ENCODE measurements at regions of chr19 and their contacts with region 1.

Region 1: DNA sequence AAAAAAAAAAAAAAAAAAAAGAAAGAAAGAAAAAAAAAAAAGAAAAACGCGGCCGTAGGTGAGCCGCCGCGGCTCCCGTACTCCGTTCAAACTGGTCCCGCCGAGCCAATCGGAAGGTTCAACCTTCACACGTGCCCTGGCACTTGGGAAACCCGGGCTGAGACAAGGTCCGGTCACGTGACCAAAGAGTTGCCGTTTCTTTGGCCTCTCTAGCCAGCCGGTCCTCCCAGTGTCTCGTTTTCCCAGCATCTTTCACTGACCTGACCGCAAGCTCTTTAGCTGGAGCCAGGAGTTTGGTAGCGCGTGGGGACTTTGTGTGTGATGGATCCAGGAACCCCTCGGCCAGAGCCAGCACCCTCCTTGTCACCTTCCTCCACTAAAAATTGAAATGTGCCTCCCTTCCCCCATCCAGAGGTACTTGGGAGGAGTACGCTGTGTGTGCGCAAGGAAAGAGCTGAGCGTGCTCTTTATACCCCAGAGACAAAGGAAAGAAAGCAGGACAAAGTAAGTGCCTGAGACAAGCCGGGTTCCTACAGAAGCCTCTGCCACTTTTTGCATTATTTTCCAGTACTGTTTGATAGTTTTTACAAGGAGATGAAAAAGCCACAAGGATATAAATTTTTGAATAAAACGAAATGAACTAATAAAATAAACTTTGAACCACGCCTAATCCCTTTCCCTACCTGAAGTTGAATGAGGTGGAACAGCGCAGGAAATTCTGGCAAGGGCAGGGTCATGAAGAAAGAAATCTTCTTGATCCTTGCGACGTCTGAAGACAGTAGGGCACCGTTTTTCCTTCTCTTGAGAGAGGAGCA is 959 bp downstream of the TNPO2 start:
- H3K4me3 Mint-ChIP-seq: peak overlapping the region; percentile 90
- H3K27ac Mint-ChIP-seq: peak overlapping the region; percentile 83
- H3K4me1 Mint-ChIP-seq: peaks cover 50% of the 10 kb centered on the region
- H3K27me3 Mint-ChIP-seq: no peaks in the 10 kb centered on the region

Region 2: GRCh38 chr19:12603714-12604113 is 119.1 kb before region 1 on chr19:
- intact Hi-C with region 1: no loop called
- H3K4me3 Mint-ChIP-seq: no peak overlapping the region
- H3K27ac Mint-ChIP-seq: no peak overlapping the region
- H3K4me1 Mint-ChIP-seq: peaks cover 10% of the 10 kb centered on the region
- H3K27me3 Mint-ChIP-seq: no peaks in the 10 kb centered on the region

Region 3: DNA sequence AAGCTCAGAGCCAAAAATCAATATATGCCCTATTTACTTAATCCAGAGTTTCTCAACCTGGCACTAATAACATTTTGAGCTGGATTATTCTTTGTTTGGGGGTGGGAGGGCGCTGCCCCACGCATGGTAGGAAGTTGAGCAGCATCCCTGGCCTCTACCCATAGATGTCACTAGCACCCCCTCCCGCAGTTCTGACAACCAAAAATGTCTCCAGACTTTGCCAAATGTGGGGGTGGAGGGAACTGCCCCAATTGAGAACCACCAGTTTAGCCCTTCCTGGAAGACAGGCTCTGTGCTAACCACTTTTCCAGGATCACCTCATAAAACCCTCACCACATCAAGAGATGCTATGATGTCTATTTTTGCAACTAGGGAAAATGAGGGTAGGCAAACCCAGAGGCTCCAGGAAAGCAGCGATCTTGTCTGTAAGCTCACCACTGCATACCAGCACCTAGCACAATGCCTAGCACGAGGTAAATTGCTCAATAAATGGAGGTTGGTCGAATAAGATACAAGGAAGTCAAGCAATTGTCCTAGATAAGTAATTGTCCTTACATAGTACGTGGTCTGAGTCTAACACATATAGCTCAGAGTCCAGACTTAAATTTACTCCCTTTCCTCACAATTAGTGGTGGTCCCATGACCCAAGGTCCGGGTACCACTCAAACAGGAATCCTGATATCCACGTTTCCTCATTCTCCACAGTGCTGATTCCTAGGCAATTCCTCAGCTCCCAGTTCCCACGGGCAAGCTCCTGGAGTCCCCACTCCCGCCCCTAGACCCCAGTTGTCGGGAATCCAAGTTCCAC is 10.8 kb after region 1 on chr19:
- intact Hi-C with region 1: loop called (anchors 1 kb)
- H3K4me3 Mint-ChIP-seq: peak overlapping the region; percentile 94
- H3K27ac Mint-ChIP-seq: peak overlapping the region; percentile 98
- H3K4me1 Mint-ChIP-seq: peaks cover 62% of the 10 kb centered on the region
- H3K27me3 Mint-ChIP-seq: no peaks in the 10 kb centered on the region

Region 4: GRCh38 chr19:12745166-12745897 is 22.6 kb after region 1 on chr19:
- intact Hi-C with region 1: no loop called
- H3K4me3 Mint-ChIP-seq: no peak overlapping the region
- H3K27ac Mint-ChIP-seq: no peak overlapping the region
- H3K4me1 Mint-ChIP-seq: peaks cover 6% of the 10 kb centered on the region
- H3K27me3 Mint-ChIP-seq: peaks cover 15% of the 10 kb centered on the region

Region 5: GRCh38 chr19:12766051-12766521 is 43.3 kb after region 1 on chr19:
- intact Hi-C with region 1: no loop called
- H3K4me3 Mint-ChIP-seq: peak overlapping the region; percentile 78
- H3K27ac Mint-ChIP-seq: peak overlapping the region; percentile 60
- H3K4me1 Mint-ChIP-seq: peaks cover 7% of the 10 kb centered on the region
- H3K27me3 Mint-ChIP-seq: no peaks in the 10 kb centered on the region

Region 6: DNA sequence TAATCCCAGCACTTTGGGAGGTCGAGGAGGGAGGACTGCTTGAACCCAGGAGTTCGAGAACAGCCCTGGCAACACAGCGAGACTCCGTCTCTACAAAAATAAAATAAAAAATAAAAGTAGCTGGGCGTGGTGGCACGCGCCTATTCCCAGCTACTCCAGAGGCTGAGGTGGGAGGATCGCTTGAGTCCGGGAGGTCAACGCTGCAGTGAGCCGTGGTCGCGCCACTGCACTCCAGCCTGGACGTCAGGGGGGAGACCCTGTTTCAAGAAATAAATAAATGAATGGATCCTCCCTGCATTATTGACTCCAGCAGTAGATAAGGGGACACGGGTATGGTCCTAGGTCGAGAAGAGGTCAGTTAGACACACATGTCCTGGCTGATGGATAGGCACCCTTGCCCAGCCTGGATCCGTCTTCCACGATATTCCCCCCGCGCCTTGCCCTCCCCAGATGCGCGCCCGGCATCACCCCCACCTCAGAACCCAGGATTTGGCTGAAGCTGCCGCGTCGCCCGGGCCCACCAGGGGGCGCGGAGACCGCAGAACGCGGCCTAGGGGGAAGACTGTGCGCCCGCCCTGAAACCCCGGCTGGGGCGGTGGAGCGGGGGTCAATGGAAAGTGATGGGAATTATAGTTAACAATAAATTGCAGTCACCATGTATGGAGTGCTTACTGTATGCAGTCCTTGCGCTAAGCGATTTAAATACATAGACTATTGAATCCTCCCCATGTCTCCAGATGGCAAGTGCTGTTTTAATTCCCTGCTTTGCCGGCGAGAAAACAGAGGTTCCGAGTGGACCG is 54.6 kb after region 1 on chr19:
- intact Hi-C with region 1: no loop called
- H3K4me3 Mint-ChIP-seq: peak overlapping the region; percentile 83
- H3K27ac Mint-ChIP-seq: peak overlapping the region; percentile 91
- H3K4me1 Mint-ChIP-seq: peaks cover 57% of the 10 kb centered on the region
- H3K27me3 Mint-ChIP-seq: no peaks in the 10 kb centered on the region

Measured in dendritic cell treated with granulocyte-macrophage colony-stimulating factor and Interleukin-4, amounts not matched to agents 40 ng/mL and 50 ng/mL, for 4 days (primary cell).